Activated naive CD8-positive, alpha-beta T cell treated with anti-CD3 and anti-CD28 coated beads, Interleukin-2, amount 10 ng/mL, durations not matched to agents 7 days and 5 days (primary cell): ENCODE measurements at regions of chr1 and their contacts with region 1.

Region 1: GRCh38 chr1:151189638-151190445 is at the start of gene VPS72:
- DNase-seq: peak; percentile 85
- ATAC-seq: peak; percentile 94
- H3K4me3 Mint-ChIP-seq: peak within 1 kb of the TSS; percentile 97
- H3K27ac Mint-ChIP-seq: peak within 1 kb of the TSS; percentile 98
- H3K4me1 Mint-ChIP-seq: peaks cover 18% of the 10 kb centered on the region
- H3K27me3 Mint-ChIP-seq: peaks cover 15% of the 10 kb centered on the region
- total RNA-seq, gene VPS72: 67.4 to 86.9 TPM

Region 2: DNA sequence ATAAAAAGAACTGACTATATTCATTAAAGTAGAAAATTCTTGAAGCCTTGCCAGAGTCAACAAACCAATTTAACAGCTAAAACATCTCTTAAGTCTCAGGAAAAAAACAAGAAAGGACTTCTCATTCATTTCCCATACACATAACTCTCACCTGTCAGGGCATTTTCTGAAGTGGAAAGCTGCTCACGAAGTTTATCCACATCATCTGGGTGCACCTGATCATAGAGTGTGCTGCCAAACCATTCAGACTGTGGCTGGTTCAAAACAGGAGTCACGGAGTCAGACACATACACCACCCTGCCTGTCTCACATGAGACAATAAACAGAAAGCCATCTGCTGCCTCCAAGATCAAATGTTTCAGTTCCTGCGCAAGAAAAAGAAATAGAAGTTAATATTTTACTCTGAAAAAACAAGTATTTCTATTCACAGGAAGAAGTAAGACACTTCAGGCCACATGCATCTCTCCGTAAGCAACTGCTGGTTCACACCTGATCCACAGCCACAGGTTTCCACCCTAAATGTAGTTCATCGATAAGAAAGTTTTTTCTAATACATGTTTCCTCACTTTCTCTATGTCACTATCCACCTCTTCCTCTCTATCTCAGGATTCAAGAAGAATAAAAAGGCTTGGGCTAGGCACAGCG is 353.6 kb before region 1 on chr1:
- POLR2A ChIA-PET with region 1: no interaction called
- DNase-seq: no peak
- ATAC-seq: no peak
- H3K4me3 Mint-ChIP-seq: no peak overlapping the region
- H3K27ac Mint-ChIP-seq: no peak overlapping the region
- H3K4me1 Mint-ChIP-seq: peaks cover 21% of the 10 kb centered on the region
- H3K27me3 Mint-ChIP-seq: no peaks in the 10 kb centered on the region

Region 3: GRCh38 chr1:151135457-151136385 is 54.1 kb before region 1 on chr1:
- POLR2A ChIA-PET with region 1: no interaction called
- DNase-seq: no peak
- ATAC-seq: no peak
- H3K4me3 Mint-ChIP-seq: no peak overlapping the region
- H3K27ac Mint-ChIP-seq: peak overlapping the region; percentile 35
- H3K4me1 Mint-ChIP-seq: peaks cover 8% of the 10 kb centered on the region
- H3K27me3 Mint-ChIP-seq: no peaks in the 10 kb centered on the region

Region 4: DNA sequence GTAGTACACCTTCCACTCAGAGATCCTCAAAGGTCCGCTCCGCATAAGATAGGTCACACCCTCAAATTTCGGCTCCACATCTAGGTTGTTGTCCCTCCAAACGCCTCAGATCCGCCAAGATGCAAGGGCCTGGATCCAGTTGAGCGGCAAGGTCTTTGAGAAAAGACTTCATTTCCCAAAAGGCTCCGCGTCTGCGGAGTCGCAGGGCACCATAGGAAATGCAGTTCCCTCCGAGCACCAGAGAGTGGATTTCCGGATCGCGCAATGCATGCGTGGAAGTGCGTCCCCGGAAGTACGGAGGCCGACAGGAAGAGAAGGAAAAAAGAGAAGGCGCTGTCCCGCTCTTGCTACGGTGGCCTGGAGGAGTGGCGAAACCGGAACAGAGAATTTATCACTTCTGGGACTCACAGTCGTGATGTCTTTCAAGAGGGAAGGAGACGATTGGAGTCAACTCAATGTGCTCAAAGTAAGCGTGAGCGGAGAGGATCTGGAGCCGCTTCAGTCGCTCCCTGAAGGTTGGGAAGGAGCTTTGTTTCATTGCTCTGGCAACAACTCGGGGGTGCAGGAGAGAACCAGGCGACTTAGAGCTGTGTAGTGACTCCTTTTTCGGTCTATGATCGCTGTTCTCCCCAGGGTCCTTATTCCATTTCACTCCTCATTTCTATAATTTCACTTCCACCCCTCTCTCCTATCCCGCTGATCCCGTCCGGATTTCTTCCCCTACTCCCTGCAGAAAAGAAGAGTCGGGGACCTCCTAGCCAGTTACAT is 23.9 kb before region 1 on chr1 and contains the starts of genes LYSMD1 and SCNM1:
- POLR2A ChIA-PET with region 1: interaction called, 22 read pairs
- DNase-seq: peak; percentile 91
- ATAC-seq: peak; percentile 96
- H3K4me3 Mint-ChIP-seq: peak within 1 kb of the TSS; percentile 95
- H3K27ac Mint-ChIP-seq: peak within 1 kb of the TSS; percentile 92
- H3K4me1 Mint-ChIP-seq: peaks cover 46% of the 10 kb centered on the region
- H3K27me3 Mint-ChIP-seq: no peaks in the 10 kb centered on the region
- total RNA-seq, gene LYSMD1: 5.2 to 6.1 TPM
- total RNA-seq, gene SCNM1: 64.5 to 66.6 TPM

Region 5: DNA sequence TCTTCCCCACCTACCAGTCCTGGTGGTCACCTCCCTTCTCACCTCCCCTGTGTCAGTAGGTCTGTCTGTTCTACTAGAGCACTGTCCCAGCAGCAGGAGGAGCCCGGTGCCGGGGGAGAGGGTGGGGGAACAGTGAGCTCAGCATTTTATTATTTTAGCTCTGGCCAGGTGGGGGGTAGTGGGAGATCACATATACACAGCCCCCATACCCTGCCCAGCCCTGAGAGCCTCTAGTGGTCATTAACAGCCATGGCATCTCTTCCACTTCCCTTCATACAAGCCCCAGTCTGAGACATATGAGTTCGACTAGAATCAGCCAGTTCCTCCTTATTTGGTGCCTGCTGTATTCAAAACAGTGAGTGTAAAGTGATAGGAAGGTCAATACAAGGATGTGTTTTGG is 13.9 kb before region 1 on chr1 and contains the start of gene TMOD4:
- POLR2A ChIA-PET with region 1: interaction called, 13 read pairs
- DNase-seq: no peak
- ATAC-seq: peak; percentile 71
- H3K4me3 Mint-ChIP-seq: no peak within 1 kb of the TSS
- H3K27ac Mint-ChIP-seq: no peak within 1 kb of the TSS
- H3K4me1 Mint-ChIP-seq: no peaks in the 10 kb centered on the region
- H3K27me3 Mint-ChIP-seq: no peaks in the 10 kb centered on the region
- total RNA-seq, gene TMOD4: 1.2 to 4.1 TPM

Region 6: GRCh38 chr1:151210830-151211229 is 21.0 kb after region 1 on chr1:
- POLR2A ChIA-PET with region 1: no interaction called
- DNase-seq: no peak
- ATAC-seq: no peak
- H3K4me3 Mint-ChIP-seq: no peak overlapping the region
- H3K27ac Mint-ChIP-seq: no peak overlapping the region
- H3K4me1 Mint-ChIP-seq: peaks cover 20% of the 10 kb centered on the region
- H3K27me3 Mint-ChIP-seq: no peaks in the 10 kb centered on the region

Region 7: DNA sequence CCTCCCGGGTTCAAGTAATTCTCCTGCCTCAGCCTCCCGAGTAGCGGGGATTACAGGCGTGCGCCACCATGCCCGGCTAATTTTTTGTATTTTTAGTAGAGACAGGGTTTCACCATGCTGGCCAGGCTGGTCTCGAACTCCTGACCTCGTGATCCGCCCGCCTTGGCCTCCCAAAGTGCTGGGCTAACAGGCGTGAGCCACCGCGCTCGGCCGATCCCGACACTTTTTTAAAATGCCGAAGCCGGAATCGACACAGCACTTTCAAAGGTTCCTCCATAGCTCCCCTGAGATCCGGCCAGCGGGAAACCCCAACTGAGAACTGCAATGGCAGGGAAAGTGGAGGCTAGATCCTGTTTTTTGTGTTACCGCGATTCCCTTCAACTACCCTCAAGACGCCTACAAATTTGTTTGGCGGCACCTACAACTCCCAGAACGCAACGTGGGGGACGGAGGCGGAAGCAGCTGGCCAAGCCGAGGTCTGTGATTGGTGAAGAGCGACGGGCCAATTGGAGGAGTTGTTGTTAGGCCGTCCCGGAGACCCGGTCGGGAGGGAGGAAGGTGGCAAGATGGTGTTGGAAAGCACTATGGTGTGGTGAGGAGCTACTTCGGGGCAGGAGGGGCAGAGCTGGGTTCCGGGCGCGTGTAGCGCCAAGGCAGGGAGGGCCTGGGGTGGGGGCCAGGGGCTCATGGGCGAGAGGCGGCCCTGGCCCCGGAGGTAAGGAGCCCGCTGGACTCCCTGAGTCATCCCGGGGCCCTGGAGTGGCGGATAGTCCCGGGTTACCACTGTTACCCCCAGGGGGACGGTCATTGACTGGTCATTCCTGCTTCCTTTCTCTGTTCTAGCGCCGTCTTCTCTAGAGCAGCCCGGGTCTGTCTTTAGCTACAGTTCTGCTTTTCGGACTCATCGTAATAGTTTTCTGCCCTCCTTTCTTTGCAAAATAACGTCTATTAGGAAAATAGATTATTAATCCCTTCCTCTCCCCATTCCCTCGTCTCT is 64.7 kb after region 1 on chr1 and contains the start of gene PSMD4:
- POLR2A ChIA-PET with region 1: interaction called, 14 read pairs
- DNase-seq: peak; percentile 86
- ATAC-seq: peak; percentile 97
- H3K4me3 Mint-ChIP-seq: peak within 1 kb of the TSS; percentile 91
- H3K27ac Mint-ChIP-seq: peak within 1 kb of the TSS; percentile 90
- H3K4me1 Mint-ChIP-seq: peaks cover 20% of the 10 kb centered on the region
- H3K27me3 Mint-ChIP-seq: no peaks in the 10 kb centered on the region
- total RNA-seq, gene PSMD4: 170 to 174 TPM